ENCODE measurements at regions of chr2 and their contacts with region 1.

Region 1: DNA sequence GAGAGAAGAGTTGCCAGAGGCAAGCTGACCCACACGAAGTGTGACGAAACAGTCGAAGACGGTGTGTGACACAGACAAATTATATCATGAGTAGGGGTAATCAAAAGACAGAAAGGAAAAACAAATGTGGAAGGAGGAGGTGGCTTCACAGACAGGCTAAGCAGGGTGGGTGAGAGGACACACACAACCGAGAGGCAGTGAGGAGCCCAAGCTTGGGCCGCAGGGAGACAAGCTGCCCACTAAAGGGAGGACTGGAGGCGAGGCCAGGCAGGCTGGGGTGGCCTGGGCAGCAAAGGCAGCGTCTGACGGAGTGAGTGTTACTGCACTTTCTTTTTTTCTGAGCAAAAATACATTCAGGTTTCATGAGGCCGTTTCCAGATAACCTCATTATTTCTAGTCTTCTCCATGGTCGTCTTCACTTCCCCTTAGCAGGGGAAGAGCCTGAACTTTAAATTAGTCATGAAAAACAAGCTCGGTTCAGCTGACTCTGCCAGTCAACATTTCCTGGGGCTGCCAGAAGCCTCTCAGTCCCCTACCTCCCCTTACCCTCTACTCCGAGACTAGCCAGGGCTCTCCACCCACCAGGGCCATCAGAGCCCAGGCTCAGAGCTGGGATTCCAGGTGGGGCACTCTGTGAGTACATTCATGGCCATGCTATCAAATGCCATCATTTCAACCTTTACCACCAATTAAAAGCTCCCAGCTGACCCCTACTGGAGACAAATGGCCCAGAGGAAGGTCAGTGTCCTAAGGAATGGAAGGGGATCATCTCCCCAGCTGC is 13.8 kb upstream of the ZFP36L2 start:
- DNase-seq: no peak
- H3K4me3 ChIP-seq: no peak overlapping the region
- H3K27ac ChIP-seq: peak overlapping the region; percentile 21 to 77 (median 41)
- H3K4me1 ChIP-seq: peaks cover 0 to 12% (median 4%) of the 10 kb centered on the region in 3 donors
- H3K27me3 ChIP-seq: no peaks in the 10 kb centered on the region
- CTCF ChIP-seq: no peak
- POLR2A ChIP-seq: no peak

Region 2: DNA sequence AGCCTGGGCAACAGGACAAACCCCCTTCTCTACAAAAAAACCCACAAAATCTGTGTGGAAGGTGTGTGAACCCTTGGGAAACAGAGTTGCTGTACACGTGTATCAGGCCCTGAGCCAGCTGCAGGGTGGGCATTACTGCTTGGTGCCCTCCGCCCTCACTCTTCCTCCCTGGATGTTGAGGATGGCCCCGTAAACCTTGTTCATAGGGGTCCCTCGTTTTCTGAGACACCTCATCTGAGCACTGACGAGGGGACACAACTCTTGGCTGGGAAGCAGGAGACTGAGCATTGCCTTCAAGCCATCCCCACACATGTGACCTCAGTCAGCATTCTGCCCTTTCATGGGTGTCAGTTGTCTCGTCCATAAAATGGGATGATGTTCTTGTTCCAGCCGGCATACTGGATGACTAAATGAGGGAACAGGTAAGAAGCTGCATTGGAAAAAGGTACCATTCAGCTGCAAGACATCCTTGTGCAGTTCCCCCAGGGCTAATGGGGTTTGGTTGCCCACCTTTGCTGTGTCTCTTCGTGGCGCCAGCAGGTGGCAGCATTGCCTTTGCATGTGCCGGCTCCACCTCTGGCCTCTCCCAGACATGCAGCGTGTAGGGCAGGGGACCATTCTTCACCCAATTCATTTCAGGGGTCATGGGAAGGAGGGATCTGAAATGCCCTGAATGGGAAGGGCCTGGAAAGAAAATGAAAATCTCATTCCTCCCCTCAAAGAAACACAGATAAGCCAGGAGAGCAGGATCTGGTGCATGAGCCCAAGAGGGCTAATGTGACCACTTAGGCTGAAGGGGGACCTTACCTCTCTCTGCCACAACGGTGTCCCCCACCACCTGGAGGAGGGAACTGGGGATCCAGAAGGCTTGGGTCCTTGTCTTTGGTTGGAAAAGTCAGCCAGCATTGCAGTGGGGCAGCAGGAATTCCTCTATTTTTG is 411.4 kb before region 1 on chr2:
- intact Hi-C with region 1: loop called (anchors 10 kb)
- DNase-seq: no peak
- H3K4me3 ChIP-seq: no peak overlapping the region
- H3K27ac ChIP-seq: peak overlapping the region; percentile 42 to 79 (median 72)
- H3K4me1 ChIP-seq: peaks cover 15 to 44% (median 27%) of the 10 kb centered on the region in 3 donors
- H3K27me3 ChIP-seq: no peaks in the 10 kb centered on the region
- CTCF ChIP-seq: peak; percentile 84 to 94 (median 93)
- POLR2A ChIP-seq: no peak

Region 3: DNA sequence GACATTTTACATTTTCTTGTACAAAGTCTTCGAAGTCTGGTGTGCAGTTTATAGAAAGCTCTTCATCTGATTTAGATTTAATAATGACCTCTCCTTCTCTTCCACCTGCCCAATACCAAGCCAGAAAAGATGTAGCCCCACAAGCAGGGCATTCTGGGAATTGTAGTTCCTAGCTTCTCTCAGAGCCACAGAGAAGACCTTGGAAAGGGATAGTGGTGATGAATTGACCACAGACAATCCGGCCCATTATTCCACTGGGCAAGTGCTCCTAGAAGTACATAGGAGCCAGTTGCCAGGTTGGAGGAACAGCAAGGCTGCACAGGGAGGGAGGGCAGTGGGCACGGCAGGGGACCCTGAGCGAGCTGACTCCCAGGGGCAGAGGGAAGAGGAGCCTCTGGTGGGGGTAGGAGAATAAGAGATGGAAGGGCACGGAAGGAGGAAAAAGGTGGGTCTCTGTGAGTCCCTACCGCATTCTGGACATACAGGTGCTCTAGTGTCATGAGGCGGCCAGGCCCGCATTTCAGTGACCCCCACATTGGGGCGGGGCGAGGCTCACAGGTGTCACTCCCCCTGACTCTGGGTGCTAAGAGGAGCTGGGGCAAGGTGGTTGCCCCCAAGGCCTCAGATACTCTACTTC is 295.3 kb before region 1 on chr2:
- intact Hi-C with region 1: loop called (anchors 10 kb)
- DNase-seq: no peak
- H3K4me3 ChIP-seq: no peak overlapping the region
- H3K27ac ChIP-seq: no peak overlapping the region
- H3K4me1 ChIP-seq: peaks cover 5 to 22% (median 14%) of the 10 kb centered on the region in 3 donors
- H3K27me3 ChIP-seq: no peaks in the 10 kb centered on the region
- CTCF ChIP-seq: no peak
- POLR2A ChIP-seq: no peak

Region 4: DNA sequence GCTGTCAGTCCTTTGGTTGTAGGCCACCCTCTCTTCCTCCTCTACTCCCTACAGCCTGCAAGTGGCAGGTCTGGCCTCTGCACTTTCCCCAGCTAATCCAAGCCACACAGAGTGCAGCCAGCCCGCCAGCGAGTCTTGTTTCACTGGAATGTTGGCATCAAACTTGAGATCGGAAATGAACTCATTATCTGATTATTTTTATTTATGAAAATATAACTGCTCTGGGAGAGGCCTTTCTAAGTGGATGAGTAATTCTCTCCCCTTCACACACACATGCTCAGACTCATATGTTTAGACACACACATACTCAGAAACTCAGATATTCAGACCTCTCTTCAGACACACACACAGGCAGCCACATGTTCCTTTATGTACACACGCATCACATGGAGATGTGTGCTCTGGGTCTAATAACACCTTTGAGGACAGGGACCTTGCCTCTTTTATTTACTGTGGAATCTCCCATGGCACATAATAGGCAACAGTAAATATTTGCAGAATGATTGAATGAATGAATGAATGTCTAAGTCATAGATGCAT is 165.0 kb before region 1 on chr2:
- intact Hi-C with region 1: no loop called
- DNase-seq: no peak
- H3K4me3 ChIP-seq: no peak overlapping the region
- H3K27ac ChIP-seq: peak overlapping the region; percentile 68 to 88 (median 84)
- H3K4me1 ChIP-seq: peaks cover 33 to 69% (median 40%) of the 10 kb centered on the region in 3 donors
- H3K27me3 ChIP-seq: no peaks in the 10 kb centered on the region
- CTCF ChIP-seq: peak in 2 of 6 experiments; percentile 2 to 19
- POLR2A ChIP-seq: peak in 2 of 4 donors; percentile 16 to 18

Measured in esophagus squamous epithelium (tissue), 5 donors.